Activated CD4-positive, alpha-beta T cell treated with anti-CD3 and anti-CD28 coated beads for 36 hours (primary cell): ENCODE measurements at regions of chr17 and their contacts with region 1.

Region 1: GRCh38 chr17:55421179-55421934 is at the start of gene MMD:
- DNase-seq: no peak
- ATAC-seq: peak; percentile 22
- H3K4me3 Mint-ChIP-seq: peak within 1 kb of the TSS; percentile 86
- H3K27ac Mint-ChIP-seq: peak within 1 kb of the TSS; percentile 89
- H3K4me1 Mint-ChIP-seq: peaks cover 44% of the 10 kb centered on the region
- H3K27me3 Mint-ChIP-seq: peaks cover 22% of the 10 kb centered on the region
- total RNA-seq, gene MMD: 17.4 to 19.6 TPM

Region 2: GRCh38 chr17:54968262-54968987 is 452.9 kb before region 1 on chr17 and contains the starts of genes COX11 and STXBP4:
- CTCF ChIA-PET with region 1: no interaction called
- POLR2A ChIA-PET with region 1: no interaction called
- intact Hi-C with region 1: loop called (anchors 1 to 5 kb)
- DNase-seq: peak; percentile 96
- ATAC-seq: peak; percentile 97
- H3K4me3 Mint-ChIP-seq: no peak within 1 kb of the TSS
- H3K27ac Mint-ChIP-seq: peak within 1 kb of the TSS; percentile 48
- H3K4me1 Mint-ChIP-seq: peaks cover 23% of the 10 kb centered on the region
- H3K27me3 Mint-ChIP-seq: no peaks in the 10 kb centered on the region
- total RNA-seq, gene COX11: 42.6 to 45.4 TPM
- total RNA-seq, gene STXBP4: 5.4 to 7.2 TPM

Region 3: DNA sequence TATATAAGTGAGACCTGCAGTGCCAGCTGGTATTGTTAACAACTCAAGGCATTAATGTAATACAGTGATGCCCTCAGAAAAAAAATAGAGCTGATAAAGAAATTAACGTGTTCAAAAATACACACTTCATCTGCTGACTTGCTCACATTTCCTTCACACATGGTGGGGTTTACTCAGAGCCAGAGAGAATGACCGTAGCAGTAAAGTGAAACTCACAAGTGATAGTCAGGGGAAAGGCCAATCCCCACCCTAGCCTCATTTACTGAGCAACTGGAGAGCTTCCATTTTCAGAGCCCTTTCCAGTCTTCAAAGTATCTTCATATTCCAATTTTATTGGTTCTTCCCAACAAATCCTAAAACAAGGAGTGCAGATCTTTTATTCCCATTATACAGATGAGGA is 230.6 kb before region 1 on chr17:
- CTCF ChIA-PET with region 1: no interaction called
- POLR2A ChIA-PET with region 1: no interaction called
- intact Hi-C with region 1: no loop called
- DNase-seq: no peak
- ATAC-seq: no peak
- H3K4me3 Mint-ChIP-seq: no peak overlapping the region
- H3K27ac Mint-ChIP-seq: no peak overlapping the region
- H3K4me1 Mint-ChIP-seq: no peaks in the 10 kb centered on the region
- H3K27me3 Mint-ChIP-seq: peaks cover 2% of the 10 kb centered on the region

Region 4: DNA sequence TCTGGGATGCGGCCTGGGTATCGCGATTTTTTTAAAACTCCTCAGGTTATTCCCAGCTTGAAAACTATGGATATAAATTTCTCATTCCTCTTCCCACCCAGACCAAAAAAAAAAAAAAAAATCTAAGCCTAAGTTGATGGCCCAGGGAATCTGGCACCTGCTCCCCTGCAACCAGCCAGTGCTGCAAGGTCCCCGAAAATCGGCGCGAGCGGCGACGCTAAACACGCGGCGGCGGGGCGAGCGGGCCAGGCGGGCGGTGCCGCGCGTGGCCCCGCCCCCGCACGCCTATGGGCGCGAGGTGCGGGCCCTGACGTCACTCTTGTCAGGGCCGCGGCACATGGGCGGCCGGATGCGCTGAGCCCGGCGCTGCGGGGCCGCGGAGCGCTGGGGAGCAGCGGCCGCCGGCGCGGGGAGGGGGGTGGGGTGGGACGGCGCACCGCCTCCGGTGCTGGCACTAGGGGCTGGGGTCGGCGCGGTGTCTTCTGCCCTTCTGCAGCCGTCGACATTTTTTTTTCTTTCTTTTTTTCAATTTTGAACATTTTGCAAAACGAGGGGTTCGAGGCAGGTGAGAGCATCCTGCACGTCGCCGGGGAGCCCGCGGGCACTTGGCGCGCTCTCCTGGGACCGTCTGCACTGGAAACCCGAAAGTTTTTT is 156.6 kb before region 1 on chr17 and contains the start of gene HLF:
- CTCF ChIA-PET with region 1: no interaction called
- POLR2A ChIA-PET with region 1: no interaction called
- intact Hi-C with region 1: loop called (anchors 1 to 10 kb)
- DNase-seq: peak; percentile 86
- ATAC-seq: peak; percentile 94
- H3K4me3 Mint-ChIP-seq: peak within 1 kb of the TSS; percentile 47
- H3K27ac Mint-ChIP-seq: no peak within 1 kb of the TSS
- H3K4me1 Mint-ChIP-seq: peaks cover 16% of the 10 kb centered on the region
- H3K27me3 Mint-ChIP-seq: peaks cover 54% of the 10 kb centered on the region
- total RNA-seq, gene HLF: 0.95 to 1.0 TPM

Region 5: GRCh38 chr17:55513885-55514591 is 92.7 kb after region 1 on chr17:
- CTCF ChIA-PET with region 1: no interaction called
- POLR2A ChIA-PET with region 1: no interaction called
- intact Hi-C with region 1: loop called (anchors 5 kb)
- DNase-seq: peak; percentile 77
- ATAC-seq: peak; percentile 66
- H3K4me3 Mint-ChIP-seq: no peak overlapping the region
- H3K27ac Mint-ChIP-seq: no peak overlapping the region
- H3K4me1 Mint-ChIP-seq: no peaks in the 10 kb centered on the region
- H3K27me3 Mint-ChIP-seq: peaks cover 2% of the 10 kb centered on the region

Region 6: GRCh38 chr17:56592487-56593085 is 1171.2 kb after region 1 on chr17:
- CTCF ChIA-PET with region 1: no interaction called
- POLR2A ChIA-PET with region 1: no interaction called
- intact Hi-C with region 1: loop called in 1 of 2 experiments (anchors 10 kb)
- DNase-seq: peak; percentile 82
- ATAC-seq: peak; percentile 60
- H3K4me3 Mint-ChIP-seq: peak overlapping the region; percentile 64
- H3K27ac Mint-ChIP-seq: no peak overlapping the region
- H3K4me1 Mint-ChIP-seq: peaks cover 20% of the 10 kb centered on the region
- H3K27me3 Mint-ChIP-seq: peaks cover 23% of the 10 kb centered on the region